CD4-positive, alpha-beta memory T cell (primary cell): ENCODE measurements at regions of chr11 and their contacts with region 1.

Region 1: GRCh38 chr11:36421546-36422155 is 88.4 kb downstream of the TRAF6 start:
- DNase-seq: no peak
- H3K4me3 ChIP-seq: no peak overlapping the region
- H3K4me3 Mint-ChIP-seq: peak overlapping the region in 7 of 8 donors; percentile 60 to 86 (median 68)
- H3K27ac ChIP-seq: no peak overlapping the region
- H3K27ac Mint-ChIP-seq: peak overlapping the region; percentile 77 to 93 (median 85)
- H3K4me1 ChIP-seq: peaks cover 69% of the 10 kb centered on the region
- H3K4me1 Mint-ChIP-seq: peaks cover 34 to 81% (median 62%) of the 10 kb centered on the region in 4 donors
- H3K27me3 ChIP-seq: no peaks in the 10 kb centered on the region
- H3K27me3 Mint-ChIP-seq: no peaks in the 10 kb centered on the region

Region 2: DNA sequence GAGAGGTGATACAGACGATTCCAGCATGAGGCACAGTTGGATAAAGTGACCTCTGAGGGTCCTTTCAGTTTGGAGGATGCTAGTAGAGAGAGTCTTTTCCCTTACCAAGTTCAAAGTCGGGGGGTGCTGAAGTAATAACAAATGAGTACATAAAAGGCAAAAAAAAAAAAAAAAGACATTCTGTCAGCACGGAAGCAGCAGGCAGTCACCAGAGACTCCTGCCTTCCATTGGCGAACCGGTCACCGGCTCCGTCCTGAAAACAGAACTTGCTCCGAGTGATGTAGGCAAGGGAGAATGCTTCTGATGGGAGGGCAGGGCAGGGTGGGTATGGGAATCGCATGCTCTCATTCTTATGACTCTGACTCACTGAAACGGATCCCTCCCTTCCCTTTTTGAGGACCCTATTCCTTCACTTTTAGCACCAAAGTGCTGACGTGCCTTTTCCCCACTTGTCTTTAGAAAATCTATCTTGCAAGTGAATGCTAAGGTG is 59.7 kb before region 1 on chr11:
- CTCF ChIA-PET with region 1: interaction called, 4 read pairs
- POLR2A ChIA-PET with region 1: interaction called, 10 read pairs
- intact Hi-C with region 1: loop called (anchors 5 kb)
- DNase-seq: no peak
- H3K4me3 ChIP-seq: no peak overlapping the region
- H3K4me3 Mint-ChIP-seq: peak overlapping the region; percentile 75 to 92 (median 84)
- H3K27ac ChIP-seq: no peak overlapping the region
- H3K27ac Mint-ChIP-seq: peak overlapping the region; percentile 72 to 87 (median 81)
- H3K4me1 ChIP-seq: peaks cover 73% of the 10 kb centered on the region
- H3K4me1 Mint-ChIP-seq: peaks cover 39 to 79% (median 63%) of the 10 kb centered on the region in 4 donors
- H3K27me3 ChIP-seq: no peaks in the 10 kb centered on the region
- H3K27me3 Mint-ChIP-seq: no peaks in the 10 kb centered on the region

Region 3: GRCh38 chr11:36411202-36411640 is 10.4 kb before region 1 on chr11:
- CTCF ChIA-PET with region 1: interaction called, 13 read pairs
- POLR2A ChIA-PET with region 1: interaction called, 49 read pairs
- intact Hi-C with region 1: no loop called
- DNase-seq: no peak
- H3K4me3 ChIP-seq: no peak overlapping the region
- H3K4me3 Mint-ChIP-seq: peak overlapping the region; percentile 29 to 87 (median 72)
- H3K27ac ChIP-seq: peak overlapping the region; percentile 48
- H3K27ac Mint-ChIP-seq: peak overlapping the region; percentile 74 to 95 (median 89)
- H3K4me1 ChIP-seq: peaks cover 70% of the 10 kb centered on the region
- H3K4me1 Mint-ChIP-seq: peaks cover 53 to 79% (median 61%) of the 10 kb centered on the region in 4 donors
- H3K27me3 ChIP-seq: no peaks in the 10 kb centered on the region
- H3K27me3 Mint-ChIP-seq: no peaks in the 10 kb centered on the region

Region 4: GRCh38 chr11:36450110-36450572 is 28.5 kb after region 1 on chr11:
- CTCF ChIA-PET with region 1: interaction called, 3 read pairs
- POLR2A ChIA-PET with region 1: interaction called, 13 read pairs
- intact Hi-C with region 1: no loop called
- DNase-seq: peak in 1 of 5 donors; percentile 10
- H3K4me3 ChIP-seq: no peak overlapping the region
- H3K4me3 Mint-ChIP-seq: peak overlapping the region; percentile 24 to 83 (median 65)
- H3K27ac ChIP-seq: no peak overlapping the region
- H3K27ac Mint-ChIP-seq: peak overlapping the region; percentile 28 to 89 (median 76)
- H3K4me1 ChIP-seq: peaks cover 54% of the 10 kb centered on the region
- H3K4me1 Mint-ChIP-seq: peaks cover 45 to 68% (median 56%) of the 10 kb centered on the region in 4 donors
- H3K27me3 ChIP-seq: no peaks in the 10 kb centered on the region
- H3K27me3 Mint-ChIP-seq: no peaks in the 10 kb centered on the region